ENCODE measurements at regions of chr11 and their contacts with region 1.

Region 1: GRCh38 chr11:65251476-65251875 is 10.3 kb upstream of the POLA2 start:
- DNase-seq: no peak
- H3K4me3 ChIP-seq: no peak overlapping the region
- H3K27ac ChIP-seq: no peak overlapping the region
- H3K4me1 ChIP-seq: no peaks in the 10 kb centered on the region
- CTCF ChIP-seq: no peak

Region 2: GRCh38 chr11:65204646-65205601 is 46.6 kb before region 1 on chr11:
- CTCF ChIA-PET with region 1: no interaction called
- POLR2A ChIA-PET with region 1: interaction called, 4 read pairs
- intact Hi-C with region 1: loop called (anchors 2 kb)
- DNase-seq: peak; percentile 48
- H3K4me3 ChIP-seq: no peak overlapping the region
- H3K27ac ChIP-seq: no peak overlapping the region
- H3K4me1 ChIP-seq: no peaks in the 10 kb centered on the region
- CTCF ChIP-seq: peak; percentile 97

Region 3: GRCh38 chr11:65236194-65237059 is 15.0 kb before region 1 on chr11:
- CTCF ChIA-PET with region 1: no interaction called
- POLR2A ChIA-PET with region 1: no interaction called
- intact Hi-C with region 1: no loop called
- DNase-seq: no peak
- H3K4me3 ChIP-seq: no peak overlapping the region
- H3K27ac ChIP-seq: no peak overlapping the region
- H3K4me1 ChIP-seq: no peaks in the 10 kb centered on the region
- CTCF ChIP-seq: no peak